ENCODE measurements at regions of chr12 and their contacts with region 1.

Region 1: GRCh38 chr12:20272801-20273200 is 95.5 kb upstream of the PDE3A start:
- DNase-seq: no peak
- ATAC-seq: peak; percentile 80 to 93 (median 86)
- H3K4me3 ChIP-seq: no peak overlapping the region
- H3K27ac ChIP-seq: peak overlapping the region; percentile 71
- H3K4me1 ChIP-seq: peaks cover 38% of the 10 kb centered on the region
- H3K27me3 ChIP-seq: no peaks in the 10 kb centered on the region
- CTCF ChIP-seq: no peak

Region 2: DNA sequence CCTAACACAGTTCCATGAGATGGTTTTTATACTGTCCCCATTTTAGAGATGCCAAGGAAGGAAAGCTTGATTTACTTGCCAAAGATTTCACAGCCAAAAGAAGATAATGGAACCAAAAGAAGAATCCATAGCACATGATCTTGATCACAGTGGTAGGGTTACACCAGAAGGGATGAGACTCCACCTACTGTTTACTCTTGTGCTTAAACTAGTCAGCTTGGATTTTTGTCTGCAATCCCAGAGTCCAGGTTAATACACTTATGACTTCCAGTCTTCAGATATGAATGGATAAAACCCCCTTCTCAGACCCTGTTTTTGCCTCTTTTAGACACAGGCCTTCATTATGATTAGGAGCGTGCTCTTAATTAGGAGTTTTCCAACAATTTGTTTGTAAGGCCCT is 379.3 kb before region 1 on chr12:
- intact Hi-C with region 1: no loop called
- DNase-seq: no peak
- ATAC-seq: no peak
- H3K4me3 ChIP-seq: no peak overlapping the region
- H3K27ac ChIP-seq: no peak overlapping the region
- H3K4me1 ChIP-seq: no peaks in the 10 kb centered on the region
- H3K27me3 ChIP-seq: no peaks in the 10 kb centered on the region
- CTCF ChIP-seq: no peak

Region 3: GRCh38 chr12:20320552-20320951 is 47.8 kb after region 1 on chr12:
- intact Hi-C with region 1: loop called in 1 of 2 experiments (anchors 10 kb)
- DNase-seq: no peak
- ATAC-seq: peak in 3 of 4 donors; percentile 62 to 90 (median 70)
- H3K4me3 ChIP-seq: peak overlapping the region; percentile 43
- H3K27ac ChIP-seq: peak overlapping the region; percentile 30
- H3K4me1 ChIP-seq: peaks cover 12% of the 10 kb centered on the region
- H3K27me3 ChIP-seq: no peaks in the 10 kb centered on the region
- CTCF ChIP-seq: no peak